ENCODE measurements at regions of chr11 and their contacts with region 1.

Region 1: DNA sequence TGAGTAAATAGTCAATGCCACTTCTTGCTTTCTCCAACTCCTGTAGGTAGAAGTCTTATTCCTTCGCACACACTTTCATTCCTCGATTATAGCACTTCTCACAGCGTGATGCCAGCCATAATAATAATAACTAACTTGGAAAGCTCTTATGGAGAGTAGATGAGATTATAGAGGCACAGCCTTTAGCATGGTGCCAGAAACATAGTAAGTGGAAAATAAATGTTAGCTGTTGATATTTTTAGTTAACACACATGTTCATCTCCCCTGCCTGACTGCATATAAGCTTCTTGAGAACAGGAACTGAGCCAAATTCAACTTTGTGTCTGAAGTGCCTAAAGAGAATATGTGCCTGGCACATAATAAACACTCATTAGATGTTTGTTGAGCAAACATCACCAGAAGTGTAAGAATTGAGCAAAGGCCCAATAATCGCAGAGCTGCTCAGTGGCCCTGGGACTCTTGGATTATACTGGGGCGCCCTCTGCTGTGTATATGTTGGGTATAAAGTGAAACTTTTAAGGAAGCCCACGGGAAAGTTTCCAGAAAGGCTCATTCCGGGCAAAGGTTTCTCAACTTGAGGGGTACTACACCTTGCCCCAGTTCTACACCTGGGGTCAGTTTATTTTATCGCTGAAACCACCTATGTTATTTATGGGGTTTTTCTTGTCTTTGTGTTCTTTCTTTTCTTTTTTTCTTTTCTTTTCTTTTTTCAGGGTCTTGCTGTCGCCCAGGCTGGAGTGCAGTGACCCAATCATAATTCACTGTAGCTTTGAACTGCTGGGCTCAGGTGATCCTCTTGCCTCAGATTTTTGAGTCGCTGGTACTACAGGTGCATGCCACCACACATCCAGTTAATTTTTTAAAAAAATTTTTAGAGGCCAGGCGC is 22.3 kb downstream of the SLN start:
- DNase-seq: peak in 31 of 35 experiments; percentile 6 to 64 (median 36)
- ATAC-seq: peak; percentile 41 to 63 (median 60)
- H3K4me3 ChIP-seq: no peak overlapping the region
- H3K4me3 Mint-ChIP-seq: no peak overlapping the region
- H3K27ac ChIP-seq: no peak overlapping the region
- H3K27ac Mint-ChIP-seq: no peak overlapping the region
- H3K4me1 ChIP-seq: no peaks in the 10 kb centered on the region
- H3K4me1 Mint-ChIP-seq: peaks cover 0 to 3% (median 0%) of the 10 kb centered on the region in 3 donors
- H3K27me3 ChIP-seq: peaks cover 0 to 4% of the 10 kb centered on the region in 2 experiments
- H3K27me3 Mint-ChIP-seq: peaks cover 14 to 15% of the 10 kb centered on the region in 2 donors

Region 2: DNA sequence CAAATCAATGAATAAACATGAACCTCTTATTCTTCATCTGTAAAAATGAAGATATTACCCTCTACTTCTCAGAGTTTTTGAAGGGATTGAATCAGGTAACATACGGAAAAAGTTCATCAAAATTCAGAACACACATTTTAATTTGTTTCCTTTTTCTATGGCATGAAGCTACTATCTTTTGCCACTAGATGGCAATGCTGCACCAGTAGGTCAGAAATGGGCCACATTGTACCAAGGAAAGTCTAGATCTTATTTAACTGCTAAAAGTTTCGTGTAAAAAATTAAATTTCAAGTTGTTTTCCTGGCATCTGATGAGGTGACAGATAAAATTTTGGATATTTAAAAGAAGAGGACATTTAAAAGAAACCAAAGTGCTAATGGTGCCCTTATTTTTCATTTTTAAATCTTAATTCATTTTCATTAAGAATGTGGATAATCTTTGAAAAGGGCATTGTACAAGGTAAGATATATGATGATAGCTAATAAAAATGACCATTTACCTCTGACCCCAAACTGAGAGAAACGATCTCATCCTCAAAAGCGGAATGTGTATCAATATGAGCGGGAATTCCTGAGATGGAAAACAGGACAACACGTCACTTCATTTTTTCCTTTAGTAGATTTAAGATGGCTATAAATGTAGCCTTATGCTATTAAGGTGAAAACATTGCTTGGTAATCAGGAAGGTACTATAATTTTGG is 140.2 kb before region 1 on chr11:
- CTCF ChIA-PET with region 1: interaction called, 15 read pairs
- POLR2A ChIA-PET with region 1: interaction called in 1 of 2 experiments, 3 read pairs
- DNase-seq: peak in 18 of 35 experiments; percentile 3 to 67 (median 17)
- ATAC-seq: peak in 1 of 4 experiments; percentile 41
- H3K4me3 ChIP-seq: no peak overlapping the region
- H3K4me3 Mint-ChIP-seq: no peak overlapping the region
- H3K27ac ChIP-seq: no peak overlapping the region
- H3K27ac Mint-ChIP-seq: no peak overlapping the region
- H3K4me1 ChIP-seq: no peaks in the 10 kb centered on the region
- H3K4me1 Mint-ChIP-seq: no peaks in the 10 kb centered on the region
- H3K27me3 ChIP-seq: no peaks in the 10 kb centered on the region
- H3K27me3 Mint-ChIP-seq: no peaks in the 10 kb centered on the region

Region 3: GRCh38 chr11:107563702-107564101 is 125.9 kb before region 1 on chr11:
- CTCF ChIA-PET with region 1: interaction called, 5 to 10 read pairs
- POLR2A ChIA-PET with region 1: no interaction called
- DNase-seq: peak in 26 of 35 experiments; percentile 2 to 67 (median 26)
- ATAC-seq: no peak
- H3K4me3 ChIP-seq: no peak overlapping the region
- H3K4me3 Mint-ChIP-seq: peak overlapping the region; percentile 23 to 86 (median 34)
- H3K27ac ChIP-seq: no peak overlapping the region
- H3K27ac Mint-ChIP-seq: peak overlapping the region in 1 of 2 donors; percentile 63
- H3K4me1 ChIP-seq: peaks cover 12 to 21% of the 10 kb centered on the region in 2 experiments
- H3K4me1 Mint-ChIP-seq: peaks cover 51 to 61% (median 57%) of the 10 kb centered on the region in 3 donors
- H3K27me3 ChIP-seq: no peaks in the 10 kb centered on the region
- H3K27me3 Mint-ChIP-seq: no peaks in the 10 kb centered on the region

Region 4: DNA sequence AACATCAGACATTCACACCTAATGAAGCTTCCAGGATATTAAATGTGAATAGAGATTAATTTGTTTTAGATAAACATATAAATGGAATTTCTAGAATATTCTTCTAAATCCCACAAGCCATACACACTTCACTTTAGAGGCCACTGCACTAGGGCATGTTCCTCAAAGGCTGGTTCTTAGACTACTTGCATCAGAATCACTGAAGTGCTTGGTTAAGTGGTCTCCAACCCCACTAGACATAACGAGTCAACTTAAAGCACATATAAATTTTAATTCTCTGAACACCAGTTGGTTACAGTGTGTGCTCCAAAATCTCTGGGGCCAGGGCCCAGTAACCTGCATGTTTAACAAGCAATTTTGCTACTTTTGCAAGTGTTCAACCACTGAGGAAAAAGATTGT is 116.1 kb before region 1 on chr11:
- CTCF ChIA-PET with region 1: interaction called, 5 to 10 read pairs
- POLR2A ChIA-PET with region 1: no interaction called
- DNase-seq: no peak
- ATAC-seq: no peak
- H3K4me3 ChIP-seq: no peak overlapping the region
- H3K4me3 Mint-ChIP-seq: no peak overlapping the region
- H3K27ac ChIP-seq: no peak overlapping the region
- H3K27ac Mint-ChIP-seq: no peak overlapping the region
- H3K4me1 ChIP-seq: no peaks in the 10 kb centered on the region
- H3K4me1 Mint-ChIP-seq: no peaks in the 10 kb centered on the region
- H3K27me3 ChIP-seq: peaks cover 0 to 8% of the 10 kb centered on the region in 2 experiments
- H3K27me3 Mint-ChIP-seq: peaks cover 4% of the 10 kb centered on the region in 2 donors

Measured in T-cell (primary cell).